ENCODE measurements at regions of chr10 and their contacts with region 1.

Region 1: DNA sequence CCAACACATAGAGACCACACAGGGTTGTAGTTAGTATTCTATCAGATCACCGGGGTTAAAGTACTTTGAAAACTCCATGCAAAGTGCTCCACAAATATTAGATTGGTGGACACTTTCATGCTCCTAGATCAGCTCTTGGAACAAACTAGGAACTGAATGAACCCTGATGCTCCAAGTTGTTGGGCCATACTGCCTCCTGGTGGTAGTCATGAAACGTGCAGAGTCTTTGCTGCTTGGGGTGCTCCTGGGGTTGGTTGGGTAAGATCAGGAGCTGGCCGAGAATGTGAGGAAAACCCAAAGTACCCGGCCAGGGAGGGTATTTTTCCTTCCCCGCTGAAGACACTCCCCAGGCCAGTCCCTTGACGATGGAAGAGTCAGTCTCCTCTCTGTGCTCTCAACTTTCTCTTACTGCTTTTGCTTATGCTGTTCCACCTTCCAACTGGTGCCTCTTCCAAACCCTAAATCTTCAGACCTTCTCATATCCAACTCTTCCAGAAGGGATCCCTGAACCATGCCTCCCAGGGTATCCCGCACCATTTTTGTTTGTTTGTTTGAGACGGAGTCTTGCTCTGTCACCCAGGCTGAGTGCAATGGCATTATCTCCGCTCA is 920 bp upstream of the RPEL1 start:
- DNase-seq: peak; percentile 82
- H3K4me3 ChIP-seq: no peak overlapping the region
- H3K27ac ChIP-seq: no peak overlapping the region
- H3K4me1 ChIP-seq: peaks cover 14% of the 10 kb centered on the region
- H3K27me3 ChIP-seq: no peaks in the 10 kb centered on the region
- CTCF ChIP-seq: peak; percentile 73

Region 2: DNA sequence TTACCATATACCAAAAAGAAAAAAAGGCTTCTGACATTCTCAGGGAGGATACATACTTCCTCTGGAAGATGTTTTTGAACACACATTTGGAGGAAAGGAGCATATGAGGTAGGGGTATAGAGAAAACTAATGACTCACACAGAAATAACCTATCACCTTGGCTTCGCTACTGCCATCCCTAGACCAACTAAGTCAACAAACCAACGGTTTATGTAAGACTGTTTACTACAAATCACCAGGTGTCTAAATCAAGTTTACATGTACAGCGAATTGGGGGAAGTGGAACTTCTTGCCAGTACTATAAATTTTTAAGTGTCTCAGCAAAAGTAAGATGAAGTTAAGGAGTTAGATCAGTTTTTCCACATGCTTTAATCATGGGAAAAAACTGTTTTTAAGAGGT is 148.6 kb before region 1 on chr10:
- intact Hi-C with region 1: loop called (anchors 10 kb)
- DNase-seq: no peak
- H3K4me3 ChIP-seq: no peak overlapping the region
- H3K27ac ChIP-seq: no peak overlapping the region
- H3K4me1 ChIP-seq: no peaks in the 10 kb centered on the region
- H3K27me3 ChIP-seq: no peaks in the 10 kb centered on the region
- CTCF ChIP-seq: no peak

Measured in colonic mucosa (tissue), 4 donors.